ENCODE measurements at regions of chr16 and their contacts with region 1.

Region 1: DNA sequence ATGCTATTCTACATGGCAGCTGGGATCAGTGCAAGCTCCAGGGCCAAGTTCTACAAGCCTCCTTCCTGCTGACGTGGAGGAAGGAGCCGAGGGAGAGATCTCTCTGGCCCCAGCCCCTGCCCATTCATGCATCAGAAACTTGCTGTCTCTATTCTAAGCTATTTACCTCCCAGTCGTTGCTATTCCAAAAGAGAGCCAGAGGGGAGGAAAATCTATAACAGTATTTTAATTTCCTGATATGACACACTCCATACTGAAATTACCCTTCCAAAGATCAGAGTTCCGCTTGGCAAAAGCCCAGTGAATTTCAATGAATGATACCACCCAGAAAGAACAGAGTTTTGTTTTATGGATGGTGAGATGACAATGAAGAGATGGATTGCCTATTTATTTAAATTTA is 133.4 kb downstream of the GRIN2A start:
- DNase-seq: no peak
- H3K4me3 ChIP-seq: no peak overlapping the region
- H3K27ac ChIP-seq: no peak overlapping the region
- H3K4me1 ChIP-seq: no peaks in the 10 kb centered on the region
- H3K27me3 ChIP-seq: peaks cover 20% of the 10 kb centered on the region; the same call in 1 of the 2 replicates
- CTCF ChIP-seq: no peak

Region 2: GRCh38 chr16:10224850-10225249 is 176.0 kb after region 1 on chr16:
- CTCF ChIA-PET with region 1: interaction called, 12 read pairs
- POLR2A ChIA-PET with region 1: no interaction called
- intact Hi-C with region 1: no loop called
- DNase-seq: no peak
- H3K4me3 ChIP-seq: no peak overlapping the region
- H3K27ac ChIP-seq: no peak overlapping the region
- H3K4me1 ChIP-seq: no peaks in the 10 kb centered on the region
- H3K27me3 ChIP-seq: peaks cover 45% of the 10 kb centered on the region
- CTCF ChIP-seq: no peak

Measured in PC-9 (cell line).